Ovary (tissue), 10 donors: ENCODE measurements at regions of chr7 and their contacts with region 1.

Region 1: GRCh38 chr7:89622838-89623672 is 531.2 kb upstream of the STEAP1 start:
- DNase-seq: peak in 2 of 5 donors; percentile 14 to 36
- H3K4me3 ChIP-seq: no peak overlapping the region
- H3K27ac ChIP-seq: no peak overlapping the region
- H3K4me1 ChIP-seq: no peaks in the 10 kb centered on the region
- H3K27me3 ChIP-seq: no peaks in the 10 kb centered on the region
- CTCF ChIP-seq: peak in 2 of 3 donors; percentile 31 to 40
- EP300 ChIP-seq: no peak
- POLR2A ChIP-seq: no peak

Region 2: GRCh38 chr7:88789480-88790064 is 833.5 kb before region 1 on chr7:
- intact Hi-C with region 1: loop called in 1 of 4 experiments (anchors 10 kb)
- DNase-seq: no peak
- H3K4me3 ChIP-seq: no peak overlapping the region
- H3K27ac ChIP-seq: no peak overlapping the region
- H3K4me1 ChIP-seq: no peaks in the 10 kb centered on the region
- H3K27me3 ChIP-seq: no peaks in the 10 kb centered on the region
- CTCF ChIP-seq: peak in 1 of 3 donors; percentile 30
- EP300 ChIP-seq: no peak
- POLR2A ChIP-seq: no peak

Region 3: GRCh38 chr7:89681448-89681847 is 58.4 kb after region 1 on chr7:
- intact Hi-C with region 1: no loop called
- DNase-seq: no peak
- H3K4me3 ChIP-seq: no peak overlapping the region
- H3K27ac ChIP-seq: no peak overlapping the region
- H3K4me1 ChIP-seq: no peaks in the 10 kb centered on the region
- H3K27me3 ChIP-seq: no peaks in the 10 kb centered on the region
- CTCF ChIP-seq: no peak
- EP300 ChIP-seq: no peak
- POLR2A ChIP-seq: no peak